ENCODE measurements at regions of chr6 and their contacts with region 1.

Region 1: DNA sequence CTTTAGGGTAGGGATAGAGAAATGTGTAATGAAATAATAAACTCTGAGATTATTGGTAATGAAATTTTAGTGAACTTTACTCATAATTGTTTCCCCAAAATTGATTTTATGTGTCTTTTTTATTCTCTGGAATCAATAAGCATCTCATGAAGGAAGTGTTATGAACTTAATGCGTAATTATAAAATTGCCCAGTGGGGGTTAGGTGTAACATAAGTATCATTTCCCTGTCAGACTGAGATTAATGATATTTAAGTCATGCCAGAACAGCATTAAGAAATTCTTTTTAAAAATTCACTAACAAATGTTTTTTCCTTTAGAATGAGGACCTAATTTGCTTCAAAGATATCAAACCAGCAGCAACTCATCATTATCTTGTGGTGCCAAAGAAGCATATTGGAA is 10.0 kb downstream of the HINT3 start:
- DNase-seq: no peak
- H3K4me3 ChIP-seq: no peak overlapping the region
- H3K27ac ChIP-seq: no peak overlapping the region
- H3K4me1 ChIP-seq: no peaks in the 10 kb centered on the region
- H3K27me3 ChIP-seq: no peaks in the 10 kb centered on the region
- CTCF ChIP-seq: no peak
- POLR2A ChIP-seq: no peak

Region 2: DNA sequence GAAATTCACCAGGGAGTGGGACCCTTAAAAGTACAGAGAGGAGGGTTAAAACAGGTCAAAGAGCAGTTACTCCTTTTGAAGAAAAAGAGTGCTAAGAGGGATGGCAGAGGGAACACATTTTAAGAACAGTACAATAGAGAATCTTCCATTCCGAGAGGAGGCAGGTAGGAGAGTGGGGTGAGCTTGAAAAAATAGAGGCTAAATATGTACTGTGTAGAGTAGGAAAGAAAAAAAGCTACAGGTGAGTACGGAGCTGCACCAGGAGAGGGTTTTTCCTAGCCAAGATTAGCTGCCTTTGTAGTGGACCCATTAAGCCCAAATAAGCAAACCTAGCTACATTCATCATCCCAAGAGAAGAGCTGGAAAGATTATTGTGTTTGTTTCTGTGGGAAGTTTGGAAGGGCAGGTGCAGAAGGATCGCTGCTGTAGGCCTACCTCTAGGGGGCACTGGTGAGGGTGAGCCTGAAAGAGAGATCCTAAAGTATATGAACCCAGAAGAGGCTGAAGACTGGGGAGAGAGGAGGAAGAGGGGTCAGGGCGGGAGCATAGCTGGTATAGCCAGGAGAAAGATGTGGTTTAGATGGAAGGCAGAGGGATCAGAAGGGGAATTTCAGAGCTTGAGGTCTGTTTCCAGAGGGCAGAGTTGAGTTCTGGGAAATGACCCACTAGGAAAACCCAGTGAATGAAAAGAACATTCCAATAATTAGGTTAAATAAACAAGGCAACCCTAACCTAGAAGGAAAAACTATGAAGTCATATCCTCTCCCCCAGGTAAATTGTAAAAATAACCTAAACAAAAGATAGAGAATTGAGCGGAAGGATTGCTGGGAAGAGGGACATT is 60.2 kb before region 1 on chr6:
- intact Hi-C with region 1: loop called (anchors 2 kb)
- DNase-seq: no peak
- H3K4me3 ChIP-seq: no peak overlapping the region
- H3K27ac ChIP-seq: no peak overlapping the region
- H3K4me1 ChIP-seq: no peaks in the 10 kb centered on the region
- H3K27me3 ChIP-seq: no peaks in the 10 kb centered on the region
- CTCF ChIP-seq: peak in 1 of 3 experiments; percentile 28
- POLR2A ChIP-seq: no peak

Measured in vagina (tissue), 2 donors.